Breast epithelium (tissue), 4 donors: ENCODE measurements at regions of chr22 and their contacts with region 1.

Region 1: GRCh38 chr22:23248583-23248982 is 68.3 kb downstream of the BCR start:
- DNase-seq: no peak
- H3K4me3 ChIP-seq: no peak overlapping the region
- H3K27ac ChIP-seq: peak overlapping the region in 1 of 2 donors; percentile 5
- H3K4me1 ChIP-seq: no peaks in the 10 kb centered on the region
- H3K27me3 ChIP-seq: no peaks in the 10 kb centered on the region
- CTCF ChIP-seq: no peak
- POLR2A ChIP-seq: no peak

Region 2: GRCh38 chr22:23220485-23221350 is 27.9 kb before region 1 on chr22:
- intact Hi-C with region 1: loop called (anchors 1 kb)
- DNase-seq: no peak
- H3K4me3 ChIP-seq: no peak overlapping the region
- H3K27ac ChIP-seq: peak overlapping the region in 1 of 2 donors; percentile 78
- H3K4me1 ChIP-seq: peaks cover 12 to 14% of the 10 kb centered on the region in 2 donors
- H3K27me3 ChIP-seq: no peaks in the 10 kb centered on the region
- CTCF ChIP-seq: no peak
- POLR2A ChIP-seq: no peak